Transverse colon (tissue), 4 donors: ENCODE measurements at regions of chr3 and their contacts with region 1.

Region 1: DNA sequence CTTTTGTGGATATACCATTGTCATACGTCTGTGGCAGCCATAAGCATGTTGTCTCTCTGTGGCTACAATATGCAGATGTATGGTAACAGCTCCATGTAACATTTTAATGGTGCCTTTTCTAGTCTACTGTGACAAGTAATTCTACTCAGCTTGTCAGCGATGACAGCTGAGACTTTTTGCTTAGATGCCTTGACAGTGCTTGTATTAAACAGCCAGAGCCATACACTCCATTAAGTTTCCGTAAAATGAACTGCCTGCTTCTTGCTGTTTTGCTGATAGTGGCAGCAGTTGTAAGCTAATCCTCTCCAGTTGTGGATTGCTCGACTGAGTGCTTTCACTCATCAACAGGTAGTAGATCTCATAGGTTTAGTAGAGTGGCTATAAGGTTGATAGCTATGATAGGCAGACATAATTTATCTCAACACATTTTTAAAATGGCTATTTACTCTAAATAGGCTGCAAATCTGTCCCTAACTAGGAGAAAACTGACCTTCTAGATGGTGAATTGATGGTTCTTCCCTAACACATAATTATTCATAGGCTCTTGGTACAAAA is 260.2 kb upstream of the NAALADL2 start:
- DNase-seq: no peak
- H3K4me3 ChIP-seq: no peak overlapping the region
- H3K27ac ChIP-seq: no peak overlapping the region
- H3K4me1 ChIP-seq: no peaks in the 10 kb centered on the region
- H3K27me3 ChIP-seq: no peaks in the 10 kb centered on the region
- CTCF ChIP-seq: no peak
- EP300 ChIP-seq: no peak
- POLR2A ChIP-seq: no peak

Region 2: DNA sequence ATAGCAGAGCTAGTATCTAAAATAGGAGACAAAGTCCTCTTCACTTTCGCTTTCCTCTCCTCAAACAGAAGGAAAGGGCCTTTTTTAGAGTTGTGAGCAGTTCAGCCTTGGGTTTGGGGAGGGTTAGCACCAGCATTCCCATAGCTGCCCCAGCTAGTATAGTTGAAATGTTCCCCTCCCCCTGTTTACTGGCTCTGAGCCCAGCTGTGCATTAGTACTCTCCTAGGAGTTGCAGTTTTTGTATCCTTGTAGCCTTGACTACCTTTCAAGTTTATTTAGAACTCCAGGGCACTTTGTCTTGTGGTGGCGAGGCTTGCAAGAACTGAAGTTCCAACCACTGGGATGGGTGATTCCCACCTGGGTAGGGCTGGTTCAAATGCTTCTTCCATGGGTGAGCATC is 15.1 kb after region 1 on chr3:
- in situ Hi-C with region 1: no loop called
- intact Hi-C with region 1: loop called (anchors 1 kb)
- DNase-seq: no peak
- H3K4me3 ChIP-seq: no peak overlapping the region
- H3K27ac ChIP-seq: no peak overlapping the region
- H3K4me1 ChIP-seq: no peaks in the 10 kb centered on the region
- H3K27me3 ChIP-seq: no peaks in the 10 kb centered on the region
- CTCF ChIP-seq: no peak
- EP300 ChIP-seq: no peak
- POLR2A ChIP-seq: no peak